PC-9 (cell line): ENCODE measurements at regions of chr1 and their contacts with region 1.

Region 1: GRCh38 chr1:168342572-168343280 is 62.0 kb downstream of the TBX19 start:
- DNase-seq: peak; percentile 55 to 76
- H3K4me3 ChIP-seq: no peak overlapping the region; the same call in 1 of the 2 replicates
- H3K27ac ChIP-seq: no peak overlapping the region
- H3K4me1 ChIP-seq: no peaks in the 10 kb centered on the region
- H3K27me3 ChIP-seq: no peaks in the 10 kb centered on the region
- CTCF ChIP-seq: peak; percentile 71

Region 2: GRCh38 chr1:168234846-168235547 is 107.7 kb before region 1 on chr1:
- CTCF ChIA-PET with region 1: interaction called, 14 read pairs
- POLR2A ChIA-PET with region 1: no interaction called
- intact Hi-C with region 1: loop called (anchors 5 kb)
- DNase-seq: no peak
- H3K4me3 ChIP-seq: no peak overlapping the region
- H3K27ac ChIP-seq: no peak overlapping the region
- H3K4me1 ChIP-seq: peaks cover 17% of the 10 kb centered on the region
- H3K27me3 ChIP-seq: no peaks in the 10 kb centered on the region
- CTCF ChIP-seq: peak; percentile 69

Region 3: GRCh38 chr1:168301664-168302334 is 40.9 kb before region 1 on chr1:
- CTCF ChIA-PET with region 1: interaction called, 24 read pairs
- POLR2A ChIA-PET with region 1: no interaction called
- intact Hi-C with region 1: no loop called
- DNase-seq: peak; percentile 88 to 98
- H3K4me3 ChIP-seq: no peak overlapping the region
- H3K27ac ChIP-seq: peak overlapping the region; percentile 81
- H3K4me1 ChIP-seq: peaks cover 40% of the 10 kb centered on the region
- H3K27me3 ChIP-seq: no peaks in the 10 kb centered on the region
- CTCF ChIP-seq: no peak

Region 4: GRCh38 chr1:168572633-168573032 is 229.9 kb after region 1 on chr1:
- CTCF ChIA-PET with region 1: no interaction called
- POLR2A ChIA-PET with region 1: no interaction called
- intact Hi-C with region 1: loop called (anchors 2 kb)
- DNase-seq: no peak
- H3K4me3 ChIP-seq: no peak overlapping the region
- H3K27ac ChIP-seq: no peak overlapping the region
- H3K4me1 ChIP-seq: no peaks in the 10 kb centered on the region
- H3K27me3 ChIP-seq: no peaks in the 10 kb centered on the region
- CTCF ChIP-seq: no peak

Region 5: GRCh38 chr1:168709405-168710305 is 366.9 kb after region 1 on chr1:
- CTCF ChIA-PET with region 1: no interaction called
- POLR2A ChIA-PET with region 1: no interaction called
- intact Hi-C with region 1: loop called (anchors 10 kb)
- DNase-seq: peak; percentile 50 to 98
- H3K4me3 ChIP-seq: peak overlapping the region; percentile 25; the same call in 1 of the 2 replicates
- H3K27ac ChIP-seq: peak overlapping the region; percentile 93
- H3K4me1 ChIP-seq: peaks cover 27% of the 10 kb centered on the region
- H3K27me3 ChIP-seq: no peaks in the 10 kb centered on the region
- CTCF ChIP-seq: no peak

Region 6: GRCh38 chr1:169348383-169349036 is 1005.8 kb after region 1 on chr1:
- CTCF ChIA-PET with region 1: interaction called, 7 read pairs
- POLR2A ChIA-PET with region 1: no interaction called
- intact Hi-C with region 1: loop called (anchors 2 kb)
- DNase-seq: no peak
- H3K4me3 ChIP-seq: no peak overlapping the region
- H3K27ac ChIP-seq: no peak overlapping the region
- H3K4me1 ChIP-seq: no peaks in the 10 kb centered on the region
- H3K27me3 ChIP-seq: no peaks in the 10 kb centered on the region
- CTCF ChIP-seq: peak; percentile 91

Region 7: GRCh38 chr1:169546087-169546995 is 1203.6 kb after region 1 on chr1:
- CTCF ChIA-PET with region 1: no interaction called
- POLR2A ChIA-PET with region 1: no interaction called
- intact Hi-C with region 1: loop called (anchors 1 kb)
- DNase-seq: peak; percentile 44 to 63
- H3K4me3 ChIP-seq: no peak overlapping the region
- H3K27ac ChIP-seq: no peak overlapping the region
- H3K4me1 ChIP-seq: no peaks in the 10 kb centered on the region
- H3K27me3 ChIP-seq: no peaks in the 10 kb centered on the region
- CTCF ChIP-seq: peak; percentile 90